Heart left ventricle (tissue), 16 donors: ENCODE measurements at regions of chr1 and their contacts with region 1.

Region 1: DNA sequence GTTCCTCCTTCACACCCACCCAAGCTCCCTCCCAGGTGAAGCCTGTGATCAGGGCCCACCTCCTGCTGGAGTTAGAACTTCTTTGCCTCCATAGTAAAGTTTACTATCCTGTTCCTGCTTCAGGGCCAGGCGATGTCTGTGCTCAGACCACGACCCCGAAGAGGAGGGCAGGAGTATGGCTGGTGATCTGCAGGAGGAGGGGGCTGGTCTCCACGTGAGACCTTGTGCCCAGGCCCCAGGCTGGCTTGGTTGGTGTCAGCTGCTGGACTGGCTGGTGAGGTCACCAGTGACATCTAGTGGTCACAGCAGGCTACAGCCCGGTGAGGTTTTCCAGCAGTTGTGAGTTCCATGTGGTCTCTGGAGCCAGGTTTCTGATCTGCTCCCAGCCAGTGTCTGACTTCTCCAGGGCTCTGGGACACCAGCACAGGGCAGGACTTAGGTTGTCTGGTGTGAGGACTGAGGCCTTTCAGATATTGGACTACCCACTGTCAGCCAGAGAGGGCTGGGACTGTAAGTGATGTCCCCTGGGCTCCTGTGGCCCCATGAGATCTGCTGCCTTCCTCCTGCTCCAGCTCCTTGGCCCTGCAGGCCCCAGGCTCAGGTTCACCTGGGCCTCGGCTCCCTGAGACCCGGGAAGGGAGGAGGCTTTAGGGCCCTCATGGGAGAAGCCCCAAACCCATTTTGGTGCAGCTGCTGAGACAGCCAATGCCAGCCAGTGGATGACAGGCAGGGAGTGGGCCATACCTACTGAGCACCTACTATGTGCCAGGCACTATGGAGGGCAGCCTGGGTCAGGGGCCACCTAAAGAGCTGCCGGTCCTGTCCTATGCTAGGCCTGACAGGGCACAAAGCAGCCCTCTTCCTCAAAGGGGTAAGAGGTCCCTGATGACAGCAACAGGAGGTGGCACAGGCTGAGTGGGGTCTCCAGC is 6.0 kb upstream of the UBL4B start:
- DNase-seq: peak; percentile 58 to 78 (median 65)
- ATAC-seq: peak; percentile 63 to 89 (median 84)
- H3K4me3 ChIP-seq: no peak overlapping the region
- H3K27ac ChIP-seq: no peak overlapping the region
- H3K4me1 ChIP-seq: peaks cover 0 to 14% (median 2%) of the 10 kb centered on the region in 12 donors
- H3K27me3 ChIP-seq: peaks cover 0 to 7% (median 0%) of the 10 kb centered on the region in 9 donors
- CTCF ChIP-seq: peak; percentile 87 to 97 (median 91)
- POLR2A ChIP-seq: no peak

Region 2: GRCh38 chr1:110034451-110035235 is 71.6 kb before region 1 on chr1 and contains the start of gene STRIP1:
- intact Hi-C with region 1: loop called in 1 of 10 experiments (anchors 2 kb)
- DNase-seq: peak; percentile 93 to 95 (median 94)
- ATAC-seq: peak; percentile 91 to 97 (median 96)
- H3K4me3 ChIP-seq: peak within 1 kb of the TSS; percentile 76 to 96 (median 93)
- H3K27ac ChIP-seq: peak within 1 kb of the TSS; percentile 84 to 96 (median 90)
- H3K4me1 ChIP-seq: peaks cover 5 to 39% (median 13%) of the 10 kb centered on the region in 12 donors
- H3K27me3 ChIP-seq: no peaks in the 10 kb centered on the region
- CTCF ChIP-seq: no peak
- POLR2A ChIP-seq: peak in 1 of 2 donors; percentile 62
- total RNA-seq, gene STRIP1: 14.7 to 22.8 (median 19.2) TPM

Region 3: GRCh38 chr1:110087812-110088738 is 18.2 kb before region 1 on chr1:
- intact Hi-C with region 1: loop called in 3 of 10 experiments (anchors 1 kb)
- DNase-seq: peak in 2 of 5 donors; percentile 40 to 44
- ATAC-seq: peak; percentile 39 to 78 (median 74)
- H3K4me3 ChIP-seq: no peak overlapping the region
- H3K27ac ChIP-seq: no peak overlapping the region
- H3K4me1 ChIP-seq: peaks cover 3 to 27% (median 13%) of the 10 kb centered on the region in 12 donors
- H3K27me3 ChIP-seq: peaks cover 0 to 35% (median 16%) of the 10 kb centered on the region in 9 donors
- CTCF ChIP-seq: peak; percentile 56 to 81 (median 70)
- POLR2A ChIP-seq: no peak

Region 4: DNA sequence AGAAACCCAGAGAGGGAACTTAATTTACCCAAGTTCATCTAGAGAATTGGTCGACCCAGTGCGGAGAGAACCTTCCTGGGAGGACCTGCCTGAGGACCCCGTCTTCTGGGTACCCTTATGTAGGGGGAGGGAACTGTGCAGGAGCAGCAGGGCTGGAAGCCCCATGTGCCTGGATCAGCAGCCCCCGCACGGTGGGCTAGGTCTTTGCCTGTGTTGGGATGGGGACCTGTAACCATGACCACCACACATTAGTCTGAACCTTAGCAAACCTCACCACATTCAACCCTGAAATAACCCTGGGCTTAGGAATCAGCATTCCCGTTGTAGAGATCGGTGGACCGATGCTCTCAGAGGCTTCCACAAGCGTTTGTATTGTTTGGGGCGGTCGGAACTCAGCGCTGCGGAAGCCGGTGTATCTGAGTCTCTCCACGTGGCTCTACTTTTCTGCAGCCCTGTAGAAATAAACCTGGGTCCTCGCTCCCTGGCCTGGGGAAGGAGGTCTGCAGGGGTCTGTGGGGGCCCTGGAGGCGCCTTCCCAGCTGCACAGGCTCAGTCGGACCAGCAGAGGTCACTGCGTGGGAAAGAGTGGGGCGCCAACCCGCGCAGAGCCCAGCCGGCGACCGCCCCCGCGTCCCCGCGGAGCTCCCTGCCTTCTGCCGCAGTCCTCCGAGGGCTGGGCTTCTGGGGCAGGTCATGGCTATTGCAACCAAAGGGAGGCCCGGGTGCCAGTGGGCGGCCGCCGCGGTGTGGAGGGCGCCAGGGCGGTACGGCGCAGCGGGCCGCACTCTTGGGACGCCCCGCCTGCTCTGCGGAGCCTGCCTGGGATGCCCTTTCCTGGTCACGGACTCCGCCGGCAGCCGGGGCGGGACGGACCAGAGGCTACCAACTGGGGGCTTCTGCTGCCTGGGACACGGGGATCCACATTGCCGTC is 448.9 kb after region 1 on chr1:
- intact Hi-C with region 1: no loop called
- DNase-seq: peak; percentile 44 to 77 (median 60)
- ATAC-seq: peak; percentile 47 to 89 (median 84)
- H3K4me3 ChIP-seq: peak overlapping the region in 10 of 12 donors; percentile 7 to 58 (median 49)
- H3K27ac ChIP-seq: peak overlapping the region in 5 of 12 donors; percentile 11 to 48 (median 36)
- H3K4me1 ChIP-seq: peaks cover 0 to 22% (median 13%) of the 10 kb centered on the region in 12 donors
- H3K27me3 ChIP-seq: peaks cover 0 to 44% (median 7%) of the 10 kb centered on the region in 9 donors
- CTCF ChIP-seq: peak; percentile 66 to 86 (median 78)
- POLR2A ChIP-seq: no peak